Mucosa of descending colon (tissue), 3 donors: ENCODE measurements at regions of chr1 and their contacts with region 1.

Region 1: GRCh38 chr1:161192476-161193465 is 6.1 kb downstream of the ADAMTS4 start:
- DNase-seq: peak in 2 of 3 donors; percentile 54 to 74
- ATAC-seq: peak; percentile 82
- H3K4me3 ChIP-seq: no peak overlapping the region
- H3K4me1 ChIP-seq: peaks cover 2% of the 10 kb centered on the region
- CTCF ChIP-seq: peak; percentile 88

Region 2: DNA sequence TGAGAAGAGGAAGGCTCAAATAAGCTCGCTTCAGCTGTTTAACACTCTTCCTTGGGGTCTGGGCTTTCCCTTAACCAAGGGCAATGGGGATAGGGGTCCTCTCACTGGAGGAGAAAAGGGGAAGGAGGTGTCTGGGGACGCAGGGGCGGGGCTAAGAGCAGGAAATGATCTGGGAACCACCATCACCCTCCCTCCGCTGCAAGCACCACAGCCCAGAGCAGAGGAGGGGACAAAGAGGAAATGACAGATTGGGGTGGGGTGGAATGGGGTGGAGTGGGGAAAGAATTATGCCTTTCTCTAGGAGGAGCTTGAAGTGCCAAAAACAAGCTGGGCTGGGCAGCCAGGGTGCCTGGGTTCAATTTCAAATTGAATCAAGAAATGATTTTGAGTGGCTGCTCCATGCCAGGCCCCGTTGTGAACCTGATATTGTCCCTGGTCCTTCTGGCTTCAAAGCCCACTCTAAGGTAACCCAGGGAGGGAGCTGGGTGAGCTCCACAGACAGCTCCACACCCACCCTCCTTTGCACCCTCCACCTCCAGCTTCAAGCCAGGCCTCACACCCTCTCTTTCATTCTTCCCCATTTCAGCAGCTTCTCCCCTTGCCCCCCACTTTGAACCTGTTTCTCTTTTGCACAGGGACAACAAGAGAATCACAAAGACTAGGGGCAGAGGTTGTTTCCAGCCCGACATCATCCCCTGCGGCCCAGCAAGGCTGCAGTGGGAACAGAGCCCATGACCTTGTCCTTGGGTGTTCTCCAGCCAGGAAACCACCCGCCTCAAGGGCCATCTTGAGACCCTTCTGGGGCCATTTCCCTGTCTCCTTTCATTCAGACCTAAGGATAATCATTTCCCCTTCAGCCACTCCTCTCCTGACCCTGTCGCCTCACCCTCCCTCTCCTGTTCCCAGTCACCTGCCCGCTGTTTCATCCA is 124.2 kb before region 1 on chr1:
- intact Hi-C with region 1: no loop called
- DNase-seq: peak; percentile 72 to 87 (median 74)
- ATAC-seq: peak; percentile 84
- H3K4me3 ChIP-seq: peak overlapping the region; percentile 24
- H3K4me1 ChIP-seq: no peaks in the 10 kb centered on the region
- CTCF ChIP-seq: no peak

Region 3: GRCh38 chr1:161145832-161146231 is 46.9 kb before region 1 on chr1:
- intact Hi-C with region 1: no loop called
- DNase-seq: no peak
- ATAC-seq: no peak
- H3K4me3 ChIP-seq: no peak overlapping the region
- H3K4me1 ChIP-seq: no peaks in the 10 kb centered on the region
- CTCF ChIP-seq: no peak

Region 4: GRCh38 chr1:161389691-161390558 is 197.2 kb after region 1 on chr1:
- intact Hi-C with region 1: loop called in 1 of 2 experiments (anchors 10 kb)
- DNase-seq: peak; percentile 98 to 99 (median 98)
- ATAC-seq: peak; percentile 96
- H3K4me3 ChIP-seq: peak overlapping the region; percentile 15
- H3K4me1 ChIP-seq: no peaks in the 10 kb centered on the region
- CTCF ChIP-seq: no peak